HCT116 (cell line): ENCODE measurements at regions of chr20 and their contacts with region 1.

Region 1: DNA sequence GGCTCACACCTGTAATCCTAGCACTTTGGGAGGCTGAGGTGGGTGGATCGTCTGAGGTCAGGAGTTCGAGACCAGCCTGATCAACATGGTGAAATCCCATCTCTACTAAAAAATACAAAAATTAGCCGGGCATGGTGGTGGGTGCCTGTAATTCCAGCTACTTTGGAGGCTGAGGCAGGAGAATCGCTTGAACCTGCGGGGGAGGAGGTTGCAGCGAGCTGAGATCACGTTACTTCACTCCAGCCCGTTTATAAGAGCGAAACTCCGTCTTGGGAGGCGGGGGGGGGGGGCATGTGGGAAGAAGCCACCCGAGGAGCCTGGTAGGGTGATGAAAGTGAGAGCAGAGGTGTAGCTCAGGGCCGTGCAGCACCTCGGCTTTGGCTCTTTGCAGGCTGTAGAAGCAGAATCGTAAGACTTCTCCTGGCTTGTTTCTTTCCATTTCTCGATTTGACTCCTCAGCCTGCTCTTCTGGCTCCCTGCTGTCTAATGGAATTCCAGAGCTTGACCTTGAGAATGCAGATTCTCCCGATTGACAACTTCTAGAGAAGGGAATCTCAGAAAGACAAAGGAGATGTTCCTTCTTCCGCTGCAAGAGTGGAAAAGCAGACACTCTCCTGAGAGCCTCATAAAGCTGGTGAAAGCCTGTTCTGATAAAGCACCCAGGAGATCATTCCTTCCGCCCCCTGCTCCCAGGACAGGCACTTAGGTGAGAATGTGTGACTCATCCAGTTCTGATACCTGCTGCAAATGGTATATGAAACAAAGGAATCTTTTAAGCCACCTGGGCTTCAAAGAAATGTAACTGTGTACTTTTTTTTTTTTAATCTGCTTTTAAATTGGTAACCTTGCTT is 26.0 kb upstream of the PPP1R16B start:
- DNase-seq: peak; percentile 92
- ATAC-seq: peak; percentile 89
- H3K4me3 ChIP-seq: peak overlapping the region; percentile 39 to 55
- H3K27ac ChIP-seq: peak overlapping the region; percentile 99
- H3K4me1 ChIP-seq: peaks cover 70 to 81% of the 10 kb centered on the region in 2 experiments
- H3K27me3 ChIP-seq: no peaks in the 10 kb centered on the region
- CTCF ChIP-seq: no peak
- POLR2A ChIP-seq: no peak
- RAD21 ChIP-seq: 0 out of 2 replicates have a peak, but pooled peaks have one; percentile 13

Region 2: DNA sequence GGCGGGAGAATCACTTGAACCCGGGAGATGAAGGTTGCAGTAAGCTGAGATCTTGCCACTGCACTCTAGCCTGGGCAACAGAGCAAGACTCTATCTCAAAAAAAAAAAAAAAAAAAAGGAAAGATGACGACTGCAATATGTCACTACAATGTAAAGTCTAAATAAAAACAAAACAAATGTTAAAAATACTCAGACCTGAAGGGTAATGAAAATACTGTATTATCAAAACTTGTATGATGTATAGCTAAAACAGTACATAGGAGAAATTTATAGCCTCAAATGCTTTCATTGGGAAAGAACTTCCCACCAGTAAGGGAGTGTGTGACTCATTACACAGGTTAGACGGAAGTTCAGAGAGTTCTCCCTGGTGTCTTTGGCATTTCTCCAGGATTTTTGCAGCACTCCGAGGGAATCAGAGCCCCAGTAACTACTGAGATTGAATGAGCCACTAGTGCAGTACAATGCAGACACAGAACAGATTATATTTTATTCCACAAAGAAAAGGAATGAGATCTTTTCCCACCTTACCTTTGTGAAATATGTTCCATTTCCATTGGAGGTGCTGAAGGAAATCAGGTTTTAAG is 319.3 kb before region 1 on chr20:
- CTCF ChIA-PET with region 1: no interaction called
- POLR2A ChIA-PET with region 1: no interaction called
- RAD21 ChIA-PET with region 1: no interaction called
- intact Hi-C with region 1: no loop called
- DNase-seq: peak; percentile 80
- ATAC-seq: peak; percentile 97
- H3K4me3 ChIP-seq: peak overlapping the region; percentile 1 to 32; a peak in 3 of 4 replicates
- H3K27ac ChIP-seq: peak overlapping the region; percentile 15; the same call in 1 of the 2 replicates
- H3K4me1 ChIP-seq: peaks cover 10 to 14% of the 10 kb centered on the region in 2 experiments
- H3K27me3 ChIP-seq: no peaks in the 10 kb centered on the region
- CTCF ChIP-seq: no peak
- POLR2A ChIP-seq: no peak
- RAD21 ChIP-seq: 0 out of 2 replicates have a peak, but pooled peaks have one; percentile 4

Region 3: GRCh38 chr20:38764567-38765355 is 14.7 kb before region 1 on chr20:
- CTCF ChIA-PET with region 1: interaction called, 3 read pairs
- POLR2A ChIA-PET with region 1: interaction called, 14 read pairs
- RAD21 ChIA-PET with region 1: interaction called, 3 to 7 read pairs
- intact Hi-C with region 1: no loop called
- DNase-seq: peak; percentile 87
- ATAC-seq: peak; percentile 98
- H3K4me3 ChIP-seq: peak overlapping the region in 1 of 2 experiments; percentile 38; a peak in 2 of 4 replicates
- H3K27ac ChIP-seq: peak overlapping the region; percentile 86
- H3K4me1 ChIP-seq: peaks cover 40 to 58% of the 10 kb centered on the region in 2 experiments
- H3K27me3 ChIP-seq: no peaks in the 10 kb centered on the region
- CTCF ChIP-seq: no peak
- POLR2A ChIP-seq: no peak
- RAD21 ChIP-seq: peak; percentile 25; the same call in 1 of the 2 replicates

Region 4: GRCh38 chr20:38790200-38791053 is 11.0 kb after region 1 on chr20:
- CTCF ChIA-PET with region 1: interaction called, 8 read pairs
- POLR2A ChIA-PET with region 1: interaction called, 14 read pairs
- RAD21 ChIA-PET with region 1: interaction called in 1 of 2 experiments, 3 read pairs
- intact Hi-C with region 1: no loop called
- DNase-seq: peak; percentile 68
- ATAC-seq: peak; percentile 89
- H3K4me3 ChIP-seq: peak overlapping the region in 1 of 2 experiments; percentile 24; a peak in 2 of 4 replicates
- H3K27ac ChIP-seq: peak overlapping the region; percentile 47
- H3K4me1 ChIP-seq: peaks cover 19 to 37% of the 10 kb centered on the region in 2 experiments
- H3K27me3 ChIP-seq: no peaks in the 10 kb centered on the region
- CTCF ChIP-seq: peak; percentile 66 to 80 (median 68); a peak in 5 of 6 replicates
- POLR2A ChIP-seq: no peak
- RAD21 ChIP-seq: peak; percentile 79

Region 5: GRCh38 chr20:38926142-38926933 is 146.9 kb after region 1 on chr20 and contains the start of gene FAM83D:
- CTCF ChIA-PET with region 1: no interaction called
- POLR2A ChIA-PET with region 1: no interaction called
- RAD21 ChIA-PET with region 1: no interaction called
- intact Hi-C with region 1: no loop called
- DNase-seq: peak; percentile 97
- ATAC-seq: peak; percentile 91
- H3K4me3 ChIP-seq: peak within 1 kb of the TSS; percentile 93 to 94
- H3K27ac ChIP-seq: peak within 1 kb of the TSS; percentile 83
- H3K4me1 ChIP-seq: peaks cover 8 to 31% of the 10 kb centered on the region in 2 experiments
- H3K27me3 ChIP-seq: peaks cover 4% of the 10 kb centered on the region; the same call in 1 of the 2 replicates
- CTCF ChIP-seq: no peak; a peak in 2 of 6 replicates
- POLR2A ChIP-seq: peak; percentile 94
- RAD21 ChIP-seq: peak; percentile 76
- total RNA-seq, gene FAM83D: 51.1 TPM